Cardiac septum (tissue), 1 donor: ENCODE measurements at regions of chr10 and their contacts with region 1.

Region 1: DNA sequence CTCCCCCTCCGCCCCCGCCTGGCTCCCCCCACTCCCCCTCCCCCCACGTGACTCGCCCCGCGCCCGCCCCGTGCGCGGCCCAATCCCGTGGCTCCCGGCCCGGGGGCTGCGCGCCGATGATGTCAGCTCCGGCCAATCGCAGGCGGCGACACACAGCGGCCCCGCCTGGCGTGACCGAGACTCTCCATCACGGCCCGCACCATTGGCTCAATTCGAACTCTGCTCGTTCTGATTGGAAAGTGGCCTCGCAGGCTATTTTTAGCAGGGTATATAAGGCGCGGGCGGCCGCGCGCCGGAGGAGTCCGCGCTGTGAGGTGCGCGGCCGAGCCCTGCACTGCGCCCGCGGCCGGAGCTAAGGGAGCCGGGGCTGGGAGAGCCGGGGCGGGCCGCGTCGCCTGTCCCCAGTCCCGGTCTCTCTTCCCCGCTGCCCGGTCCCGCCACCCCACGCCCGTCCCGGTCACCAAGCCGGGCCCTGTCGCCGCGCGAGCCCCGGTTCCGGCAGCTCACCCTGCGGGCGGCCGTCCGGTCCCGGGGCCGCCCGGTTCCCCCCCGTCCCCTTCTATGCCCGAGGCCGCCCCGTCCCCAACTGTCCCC is 345 bp upstream of the KLF6 start:
- DNase-seq: peak; percentile 99

Region 2: DNA sequence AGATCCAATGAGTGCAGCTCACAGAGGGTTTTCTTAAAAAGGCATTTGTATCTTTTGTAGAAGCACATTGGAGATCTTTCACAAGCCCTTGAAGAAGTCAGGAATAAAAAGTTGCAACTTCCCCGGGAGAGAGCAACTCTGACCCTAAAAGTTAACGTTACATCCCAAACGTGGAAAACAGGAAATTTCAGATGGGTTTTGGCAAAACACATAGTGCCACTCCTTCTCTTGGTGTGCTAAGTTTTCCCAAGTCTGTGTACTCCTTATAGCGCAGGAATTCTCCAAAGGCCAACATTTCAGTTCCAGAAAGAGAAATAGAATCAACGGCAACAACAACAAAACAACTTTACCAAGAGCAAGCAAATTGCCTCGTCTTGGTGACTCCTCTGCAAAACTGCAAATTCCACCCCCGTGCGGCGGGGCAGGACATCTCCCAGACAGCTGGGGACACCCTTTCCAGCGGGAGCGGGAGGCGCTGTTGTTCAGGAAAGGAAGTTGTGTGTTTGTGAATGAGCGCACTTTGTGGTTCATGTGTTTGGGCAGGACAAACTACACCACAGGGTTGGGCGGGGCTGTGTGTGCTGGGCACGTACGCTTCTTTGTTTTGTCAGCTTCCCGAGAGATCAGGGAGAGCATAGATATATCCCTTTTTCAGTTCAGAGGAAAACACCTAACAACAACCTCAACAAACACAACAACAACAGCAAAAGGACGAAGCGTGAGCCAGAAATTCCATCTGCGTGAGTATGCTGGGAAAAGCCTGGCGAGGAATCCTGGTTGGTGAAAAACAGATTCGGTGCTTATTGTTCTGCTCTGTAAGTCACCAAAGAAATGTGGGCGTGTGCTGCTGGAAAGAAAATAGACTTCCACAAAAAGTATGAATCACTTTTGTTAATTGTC is 318.1 kb before region 1 on chr10:
- intact Hi-C with region 1: loop called (anchors 2 kb)
- DNase-seq: peak; percentile 89

Region 3: DNA sequence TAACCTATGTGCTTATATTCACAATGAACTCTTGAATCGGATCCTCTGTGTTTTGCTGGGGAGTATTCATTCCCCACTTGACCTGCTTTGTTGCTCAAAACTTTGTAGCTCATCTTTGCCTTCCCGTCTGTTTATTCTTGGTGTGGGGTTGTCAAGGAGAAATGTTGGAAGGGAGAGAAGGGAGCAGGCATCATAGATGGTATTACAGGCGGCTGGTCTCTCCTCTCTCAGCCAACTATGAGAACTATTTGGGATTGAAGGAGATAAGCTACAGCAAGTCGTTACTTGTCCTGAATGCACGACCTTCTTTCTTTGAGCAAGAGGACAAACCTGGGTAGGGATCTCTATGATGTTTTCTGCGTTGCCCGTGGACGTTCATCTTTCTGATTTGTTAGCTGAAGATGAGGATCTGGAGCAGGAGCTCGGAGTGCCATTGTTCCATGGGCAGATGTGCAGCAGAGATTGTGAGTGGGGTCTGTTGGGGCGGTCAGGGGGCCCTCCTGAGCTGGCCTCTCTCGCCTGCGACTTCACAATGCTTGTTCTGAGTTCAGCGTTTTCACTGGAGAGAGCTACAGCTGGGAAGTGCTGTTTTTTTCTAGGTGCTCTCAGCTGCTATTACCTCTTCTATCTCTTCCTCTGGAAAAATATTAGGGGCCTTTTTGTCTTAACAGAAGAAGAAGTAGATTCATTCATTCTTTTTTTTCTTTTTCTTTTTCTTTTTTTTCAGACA is 126.5 kb after region 1 on chr10:
- intact Hi-C with region 1: loop called (anchors 5 kb)
- DNase-seq: no peak

Region 4: DNA sequence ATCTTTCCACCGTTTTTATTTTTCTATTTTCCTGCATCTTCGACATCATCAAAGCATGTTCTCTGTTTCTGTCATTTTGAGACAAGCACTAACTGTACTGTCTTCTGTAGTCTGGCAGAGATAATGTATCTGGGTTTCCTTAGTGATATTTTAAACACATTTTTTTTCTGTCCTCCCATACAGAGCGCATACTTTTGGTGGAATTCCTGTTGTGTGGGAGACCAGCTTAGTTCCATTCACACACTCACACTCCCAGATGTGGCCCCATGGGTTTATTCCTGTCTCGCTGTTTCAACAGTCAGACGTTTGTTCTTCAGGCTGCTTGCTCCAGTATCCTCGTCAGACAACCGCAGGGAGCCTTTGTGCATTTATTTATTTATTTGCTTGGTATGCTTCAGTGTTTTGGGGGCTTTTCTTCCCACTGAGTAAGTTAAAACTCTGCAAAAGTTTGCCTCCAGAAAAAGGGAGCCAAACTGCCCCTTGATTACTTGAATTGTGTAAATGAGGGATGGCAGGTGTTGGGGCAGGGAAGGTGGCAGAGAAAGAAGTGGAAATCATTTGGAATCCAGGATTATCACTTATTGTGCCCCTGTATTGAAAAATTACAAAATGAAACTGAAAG is 456.5 kb after region 1 on chr10:
- intact Hi-C with region 1: loop called (anchors 1 kb)
- DNase-seq: no peak

Region 5: DNA sequence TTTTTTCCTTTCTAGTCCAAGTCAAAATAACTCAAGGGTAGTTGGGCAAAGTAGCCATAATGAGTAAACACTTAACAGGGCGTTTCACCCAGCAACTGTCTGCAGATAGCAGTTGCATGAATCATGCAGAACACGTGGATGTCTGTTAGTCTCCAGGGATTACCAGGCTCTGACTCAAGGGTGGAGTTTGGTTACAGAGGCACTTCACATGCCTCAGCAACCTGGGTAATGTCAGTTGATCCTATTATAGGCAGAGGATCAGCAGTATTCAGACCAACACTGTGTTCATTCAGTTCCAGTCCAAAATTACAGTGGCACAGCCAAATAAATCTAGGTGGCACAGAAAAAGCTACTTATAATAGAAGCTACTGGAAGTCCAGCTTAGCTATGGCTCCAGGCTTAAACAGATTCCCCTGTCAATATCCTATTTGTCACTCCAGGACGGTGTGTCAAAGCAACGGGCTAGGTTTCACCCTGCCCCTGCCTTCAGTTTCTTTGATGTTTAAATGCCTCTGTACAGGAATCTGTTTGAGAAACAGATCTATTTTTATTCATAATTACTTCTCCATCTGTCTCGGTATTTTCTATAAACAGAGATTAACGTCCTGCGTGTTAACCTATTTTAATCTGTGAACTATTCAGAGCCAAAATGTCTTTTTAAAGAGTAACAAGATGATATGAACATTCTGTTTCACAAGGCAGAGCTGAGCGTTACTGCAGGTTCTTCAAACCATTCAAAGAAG is 878.0 kb after region 1 on chr10:
- intact Hi-C with region 1: loop called (anchors 5 kb)
- DNase-seq: peak; percentile 79